ENCODE measurements at regions of chr14 and their contacts with region 1.

Region 1: GRCh38 chr14:97832776-97833175 is 1035.6 kb downstream of the VRK1 start:
- DNase-seq: no peak
- H3K4me3 ChIP-seq: no peak overlapping the region
- H3K27ac ChIP-seq: no peak overlapping the region
- H3K4me1 ChIP-seq: no peaks in the 10 kb centered on the region
- H3K27me3 ChIP-seq: no peaks in the 10 kb centered on the region
- CTCF ChIP-seq: no peak
- EP300 ChIP-seq: no peak
- POLR2A ChIP-seq: no peak

Region 2: DNA sequence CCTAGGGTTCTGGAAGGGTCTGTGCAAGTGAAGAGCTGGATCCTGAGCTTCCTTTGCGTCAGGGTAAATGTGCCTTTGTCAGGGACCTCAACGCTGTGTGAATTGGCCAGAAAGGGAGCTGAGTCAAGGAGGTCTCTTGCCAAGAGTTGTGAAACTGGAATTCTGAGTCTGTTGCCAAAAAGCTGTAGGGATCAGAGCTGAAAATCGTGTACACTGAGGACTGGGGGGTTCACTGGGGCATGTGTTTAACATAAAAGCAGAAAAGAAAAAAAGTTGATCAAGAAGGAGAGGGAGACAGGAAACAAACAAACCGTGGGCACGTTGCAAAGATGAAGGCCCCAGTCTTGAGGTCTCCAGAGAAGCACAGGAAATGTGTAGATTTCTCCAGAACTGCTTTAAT is 46.0 kb after region 1 on chr14:
- intact Hi-C with region 1: no loop called
- DNase-seq: peak in 2 of 5 donors; percentile 10 to 25
- H3K4me3 ChIP-seq: no peak overlapping the region
- H3K27ac ChIP-seq: no peak overlapping the region
- H3K4me1 ChIP-seq: no peaks in the 10 kb centered on the region
- H3K27me3 ChIP-seq: no peaks in the 10 kb centered on the region
- CTCF ChIP-seq: no peak
- EP300 ChIP-seq: no peak
- POLR2A ChIP-seq: no peak

Region 3: GRCh38 chr14:97900196-97900854 is 67.5 kb after region 1 on chr14:
- intact Hi-C with region 1: loop called in 1 of 4 experiments (anchors 2 kb)
- DNase-seq: no peak
- H3K4me3 ChIP-seq: no peak overlapping the region
- H3K27ac ChIP-seq: no peak overlapping the region
- H3K4me1 ChIP-seq: no peaks in the 10 kb centered on the region
- H3K27me3 ChIP-seq: no peaks in the 10 kb centered on the region
- CTCF ChIP-seq: no peak
- EP300 ChIP-seq: no peak
- POLR2A ChIP-seq: no peak